ENCODE measurements at regions of chr2 and their contacts with region 1.

Region 1: GRCh38 chr2:74458132-74458925 is at the start of gene WBP1:
- DNase-seq: peak; percentile 100
- H3K4me3 ChIP-seq: peak within 1 kb of the TSS; percentile 63 to 83 (median 68)
- H3K27ac ChIP-seq: peak within 1 kb of the TSS; percentile 90 to 98 (median 98)
- H3K4me1 ChIP-seq: peaks cover 0 to 40% (median 37%) of the 10 kb centered on the region in 4 donors
- H3K27me3 ChIP-seq: no peaks in the 10 kb centered on the region
- CTCF ChIP-seq: no peak
- EP300 ChIP-seq: no peak
- POLR2A ChIP-seq: peak in 1 of 2 donors; percentile 48
- total RNA-seq, gene WBP1: 63.1 to 89.2 (median 74.1) TPM

Region 2: DNA sequence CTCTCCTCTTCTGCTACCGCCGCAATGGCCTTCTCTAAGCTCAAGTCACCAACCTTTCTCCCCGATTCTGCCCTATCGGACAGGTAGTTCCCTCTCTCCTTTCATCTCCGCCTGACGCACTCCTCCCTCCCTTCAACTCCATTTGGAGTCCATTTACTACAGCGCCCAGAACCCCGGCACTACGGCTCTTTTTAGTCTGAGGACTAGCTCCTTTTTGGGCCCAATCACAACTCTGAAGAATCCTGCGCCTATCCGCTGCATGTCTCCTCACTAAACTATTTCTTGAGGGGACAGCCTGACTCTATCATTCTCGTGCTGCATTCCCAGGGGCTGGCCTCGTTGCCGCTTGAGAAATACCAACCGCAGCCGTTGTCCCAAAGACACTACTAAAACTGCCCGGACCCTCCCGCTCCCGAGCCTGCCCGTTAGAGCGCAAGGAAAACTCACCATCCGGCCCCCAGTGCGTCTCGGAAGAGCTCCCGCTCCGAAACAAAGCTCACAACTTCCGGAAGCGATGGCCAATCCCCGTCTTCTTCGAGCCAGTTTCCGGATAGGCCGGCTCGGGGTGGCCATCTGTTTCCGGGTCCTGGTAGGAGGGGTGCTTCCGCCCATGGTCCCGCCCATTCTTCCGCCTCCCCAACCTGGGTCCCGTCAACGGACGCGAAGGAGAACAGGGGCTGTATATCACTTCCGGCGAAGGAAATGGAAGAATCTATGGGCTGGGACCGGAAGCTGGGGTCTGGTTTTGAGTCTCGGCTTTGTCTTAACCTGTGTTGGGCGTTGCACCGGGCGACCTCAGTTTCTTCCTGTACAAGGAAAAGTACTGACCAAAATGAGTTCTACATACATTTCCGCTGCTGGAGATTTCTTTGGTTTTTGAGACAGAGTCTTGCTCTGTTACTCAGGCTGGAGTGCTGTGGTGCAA is 721.2 kb before region 1 on chr2 and contains the start of gene TPRKB:
- intact Hi-C with region 1: loop called (anchors 5 kb)
- DNase-seq: peak; percentile 98
- H3K4me3 ChIP-seq: peak within 1 kb of the TSS; percentile 66 to 83 (median 71)
- H3K27ac ChIP-seq: peak within 1 kb of the TSS; percentile 74 to 80 (median 80)
- H3K4me1 ChIP-seq: peaks cover 0 to 19% (median 14%) of the 10 kb centered on the region in 4 donors
- H3K27me3 ChIP-seq: no peaks in the 10 kb centered on the region
- CTCF ChIP-seq: no peak
- EP300 ChIP-seq: peak in 1 of 4 donors; percentile 33
- POLR2A ChIP-seq: peak; percentile 35 to 39
- total RNA-seq, gene TPRKB: 19.0 to 45.9 (median 40.2) TPM

Region 3: DNA sequence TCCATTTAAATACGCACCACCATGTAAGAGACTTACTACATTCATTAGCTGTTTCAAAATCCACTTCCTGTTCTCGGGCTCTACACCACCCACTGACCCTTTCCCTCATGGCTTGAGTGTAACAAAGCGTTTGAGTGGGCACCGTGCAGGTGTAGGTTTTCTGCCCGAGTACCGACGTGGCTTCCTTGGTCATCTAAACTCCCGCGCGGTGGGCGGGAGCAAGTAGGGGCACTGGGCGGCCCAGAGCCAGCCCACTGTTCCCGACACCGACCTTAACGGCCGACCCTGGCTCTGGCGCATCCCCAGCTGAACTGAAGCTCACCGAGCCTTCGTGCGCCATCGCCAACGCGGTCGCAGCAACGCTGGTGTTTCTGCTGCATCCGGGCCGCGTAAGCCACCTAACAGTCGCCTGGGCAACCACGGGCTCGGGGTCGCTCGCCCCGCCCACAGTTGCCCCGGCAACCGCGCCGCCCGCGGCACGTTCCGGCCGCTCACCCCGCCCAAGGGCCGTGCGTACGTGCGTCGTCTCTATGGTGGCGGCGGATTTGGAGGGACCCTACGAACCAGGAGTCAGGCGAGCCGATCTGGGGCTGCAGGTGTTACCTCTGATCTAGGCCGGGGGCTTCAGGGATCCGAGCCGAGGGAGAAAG is 37.0 kb before region 1 on chr2 and contains the starts of genes C2orf81 and WDR54:
- intact Hi-C with region 1: loop called (anchors 2 kb)
- DNase-seq: peak; percentile 92
- H3K4me3 ChIP-seq: peak within 1 kb of the TSS; percentile 63 to 71 (median 69)
- H3K27ac ChIP-seq: peak within 1 kb of the TSS; percentile 69 to 77 (median 74)
- H3K4me1 ChIP-seq: peaks cover 0 to 19% (median 10%) of the 10 kb centered on the region in 4 donors
- H3K27me3 ChIP-seq: no peaks in the 10 kb centered on the region
- CTCF ChIP-seq: no peak
- EP300 ChIP-seq: no peak
- POLR2A ChIP-seq: peak in 1 of 2 donors; percentile 17
- total RNA-seq, gene C2orf81: 1.4 to 2.2 (median 2.0) TPM in 3 of 4 donors, not detected in the other
- total RNA-seq, gene WDR54: 7.5 to 13.3 (median 9.8) TPM

Region 4: DNA sequence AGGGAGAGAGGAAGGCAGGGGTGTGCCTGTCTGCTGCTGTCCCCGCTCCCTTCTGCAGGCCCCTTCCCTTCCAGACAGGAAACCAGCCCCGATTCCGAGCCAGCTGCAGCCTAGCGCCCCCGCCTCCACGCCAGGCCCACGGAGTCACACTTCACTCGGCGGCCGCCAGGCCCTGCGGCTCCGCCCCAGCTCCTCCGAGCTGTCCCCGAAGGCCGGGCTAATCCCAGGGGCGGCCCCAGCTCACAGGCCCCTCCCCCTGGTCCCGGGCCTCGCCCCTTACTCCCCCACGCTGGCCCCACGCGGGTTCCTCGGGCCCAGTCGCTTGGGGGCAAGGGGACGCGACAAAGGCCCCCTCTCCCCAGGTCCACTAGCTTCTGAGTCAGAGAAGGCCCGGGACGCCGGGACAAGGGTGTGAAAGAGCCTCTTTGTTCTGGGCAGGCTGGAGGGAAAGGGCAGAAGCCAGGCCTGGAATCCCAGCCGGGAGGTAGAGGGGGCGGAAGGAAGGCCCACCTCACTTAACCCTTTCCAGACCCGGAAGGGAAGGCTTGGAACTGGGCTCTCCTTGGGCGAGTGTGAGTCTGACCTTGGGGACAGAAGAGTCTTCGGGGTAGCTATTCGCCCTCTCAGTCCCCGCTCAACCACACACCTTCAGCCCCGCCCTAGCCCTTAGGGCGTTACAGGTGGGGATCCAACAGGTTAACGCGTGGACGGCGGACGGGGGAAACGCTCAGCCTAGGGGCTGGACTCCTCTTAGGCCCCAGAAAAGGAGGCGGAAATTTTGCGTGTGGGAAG is 17.8 kb before region 1 on chr2:
- intact Hi-C with region 1: loop called (anchors 1 kb)
- DNase-seq: peak; percentile 95
- H3K4me3 ChIP-seq: peak overlapping the region; percentile 49 to 67 (median 54)
- H3K27ac ChIP-seq: peak overlapping the region; percentile 77 to 87 (median 84)
- H3K4me1 ChIP-seq: peaks cover 0 to 57% (median 43%) of the 10 kb centered on the region in 4 donors
- H3K27me3 ChIP-seq: peaks cover 6 to 27% (median 6%) of the 10 kb centered on the region in 3 donors
- CTCF ChIP-seq: peak; percentile 40 to 54 (median 45)
- EP300 ChIP-seq: no peak
- POLR2A ChIP-seq: peak in 1 of 2 donors; percentile 42